Activated naive CD4-positive, alpha-beta T cell treated with anti-CD3 and anti-CD28 coated beads for 36 hours (primary cell): ENCODE measurements at regions of chr9 and their contacts with region 1.

Region 1: DNA sequence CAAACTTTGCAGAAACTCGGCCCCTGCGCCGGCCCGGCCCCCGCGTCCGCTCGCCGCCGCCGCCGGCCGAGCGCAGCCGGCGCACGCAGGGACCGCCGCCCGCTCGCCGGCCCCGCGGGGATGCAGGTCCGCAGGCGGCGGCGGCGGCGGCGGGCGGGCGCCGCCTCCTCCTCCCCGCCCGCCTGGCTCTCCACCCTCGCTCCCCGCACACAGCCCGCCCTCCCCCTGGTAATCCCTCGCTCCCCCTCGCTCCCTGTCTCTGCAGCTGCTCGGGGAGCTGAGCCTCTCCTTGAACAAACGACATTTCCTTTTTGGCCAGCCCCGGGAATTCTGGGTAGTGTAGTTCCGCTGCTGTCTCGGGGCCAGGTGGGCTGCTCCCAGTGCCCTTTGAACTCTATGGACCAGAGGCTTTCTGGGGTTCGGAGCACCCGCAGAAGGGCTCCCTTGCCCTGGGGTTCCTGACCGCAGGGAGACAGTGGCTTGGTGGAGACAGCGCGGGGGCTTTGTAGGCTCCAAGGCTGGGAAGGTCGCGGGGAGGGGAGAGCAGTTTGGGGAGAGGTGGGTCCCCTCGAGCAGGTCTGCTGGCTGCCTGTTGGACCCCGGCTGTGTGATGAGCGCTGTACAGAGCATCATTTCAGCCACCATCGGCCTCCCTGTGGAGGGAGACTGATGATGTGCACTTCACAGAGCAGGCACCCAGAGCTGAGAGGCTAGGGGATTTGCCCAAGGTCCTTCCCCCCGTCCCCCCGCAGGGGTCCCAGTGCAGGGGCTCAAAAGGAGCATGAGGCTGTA is 1.8 kb upstream of the FAM78A start:
- DNase-seq: peak; percentile 86
- H3K4me3 Mint-ChIP-seq: peak overlapping the region; percentile 76
- H3K27ac Mint-ChIP-seq: peak overlapping the region; percentile 67
- H3K4me1 Mint-ChIP-seq: peaks cover 20% of the 10 kb centered on the region
- H3K27me3 Mint-ChIP-seq: peaks cover 4% of the 10 kb centered on the region

Region 2: DNA sequence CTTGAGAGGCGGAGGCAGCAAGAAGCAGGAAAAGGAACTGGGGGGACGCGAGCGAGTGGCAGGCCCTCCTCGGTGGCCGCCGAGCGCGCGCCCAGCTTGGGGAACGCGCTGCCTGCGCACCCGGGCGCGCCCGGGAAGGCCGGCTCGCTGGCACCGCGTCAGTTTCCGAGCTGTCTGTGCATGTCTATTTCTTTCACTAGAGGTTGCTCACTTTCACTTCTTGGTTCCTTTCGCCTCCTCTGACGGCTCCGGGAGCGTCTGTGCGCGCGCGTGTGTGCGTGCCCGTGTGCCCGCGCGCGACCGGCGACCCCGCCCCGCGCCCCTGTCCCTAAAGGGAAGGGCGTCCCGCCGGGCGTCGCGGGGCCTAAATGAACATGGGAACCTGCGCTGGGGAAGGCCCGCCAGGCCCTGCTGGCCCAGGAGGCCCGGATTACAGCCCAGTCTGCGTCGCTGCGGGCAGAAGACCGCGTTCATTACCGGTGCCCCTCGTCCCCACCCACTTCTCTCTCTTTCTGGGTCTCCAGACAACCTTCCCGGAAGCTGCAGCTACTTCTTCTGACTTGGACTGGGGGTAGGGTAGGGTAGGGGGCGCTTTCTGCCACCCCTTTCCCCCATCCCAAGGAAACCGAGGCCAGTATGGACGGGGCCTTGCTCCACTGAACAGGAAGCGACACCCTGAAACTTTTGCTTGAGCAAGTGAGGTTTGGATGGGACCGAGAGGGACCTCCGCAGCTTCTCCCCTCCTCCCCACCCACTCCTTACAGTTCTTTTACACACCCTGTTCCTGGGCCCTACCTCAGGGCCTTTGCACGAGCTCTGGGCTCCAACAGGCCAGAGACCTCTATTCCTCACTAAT is 1894.3 kb before region 1 on chr9:
- CTCF ChIA-PET with region 1: no interaction called
- intact Hi-C with region 1: no loop called
- DNase-seq: peak; percentile 80
- H3K4me3 Mint-ChIP-seq: peak overlapping the region; percentile 69
- H3K27ac Mint-ChIP-seq: peak overlapping the region; percentile 66
- H3K4me1 Mint-ChIP-seq: peaks cover 10% of the 10 kb centered on the region
- H3K27me3 Mint-ChIP-seq: no peaks in the 10 kb centered on the region

Region 3: DNA sequence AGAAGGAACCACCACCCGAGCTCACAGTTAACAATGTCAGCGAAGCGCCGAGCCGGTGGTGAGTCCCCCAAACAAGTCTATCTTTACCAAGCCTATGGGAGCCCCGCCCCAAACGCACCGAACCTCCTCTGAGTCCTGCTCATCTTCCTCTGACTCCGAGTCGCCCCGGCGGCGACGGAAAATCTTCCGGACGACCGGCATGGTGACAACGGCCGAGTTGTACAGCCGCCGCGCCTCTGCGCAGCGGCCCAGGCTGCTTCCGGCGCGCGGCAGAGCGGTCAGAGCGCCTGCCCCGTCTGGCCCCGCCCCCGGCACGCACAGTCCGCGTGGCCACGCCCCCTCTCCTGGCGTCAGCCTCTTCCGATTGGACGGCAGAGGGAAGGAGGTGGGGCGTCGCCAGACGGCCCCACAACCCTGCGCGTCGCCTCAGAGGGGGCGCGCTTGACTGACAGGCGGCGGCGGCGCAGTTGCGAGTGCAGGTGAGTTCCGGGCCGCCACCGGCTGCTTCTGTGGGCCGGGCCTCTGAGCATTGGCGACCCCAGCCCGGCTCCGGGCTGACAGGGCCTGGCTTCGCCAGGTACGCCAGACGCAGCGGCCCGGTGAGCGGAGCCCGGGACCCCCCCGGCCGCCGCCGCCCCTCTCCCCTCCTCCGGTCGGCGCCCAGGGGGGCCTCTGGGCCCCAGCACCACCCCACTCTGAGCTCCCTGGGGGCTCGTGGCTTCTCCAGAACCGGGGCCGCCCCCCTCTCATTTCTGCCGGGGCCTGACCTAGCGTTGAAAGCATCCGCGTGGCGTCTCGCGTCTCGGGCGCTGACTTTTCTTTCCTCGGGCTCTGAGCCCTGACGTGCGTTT is 1442.9 kb before region 1 on chr9 and contains the starts of genes C9orf78 and USP20:
- CTCF ChIA-PET with region 1: no interaction called
- intact Hi-C with region 1: loop called (anchors 10 kb)
- DNase-seq: peak; percentile 97
- H3K4me3 Mint-ChIP-seq: peak within 1 kb of the TSS; percentile 97
- H3K27ac Mint-ChIP-seq: peak within 1 kb of the TSS; percentile 94
- H3K4me1 Mint-ChIP-seq: peaks cover 56% of the 10 kb centered on the region
- H3K27me3 Mint-ChIP-seq: no peaks in the 10 kb centered on the region
- total RNA-seq, gene C9orf78: 45.3 to 45.7 TPM
- total RNA-seq, gene USP20: 54.7 to 54.9 TPM

Region 4: DNA sequence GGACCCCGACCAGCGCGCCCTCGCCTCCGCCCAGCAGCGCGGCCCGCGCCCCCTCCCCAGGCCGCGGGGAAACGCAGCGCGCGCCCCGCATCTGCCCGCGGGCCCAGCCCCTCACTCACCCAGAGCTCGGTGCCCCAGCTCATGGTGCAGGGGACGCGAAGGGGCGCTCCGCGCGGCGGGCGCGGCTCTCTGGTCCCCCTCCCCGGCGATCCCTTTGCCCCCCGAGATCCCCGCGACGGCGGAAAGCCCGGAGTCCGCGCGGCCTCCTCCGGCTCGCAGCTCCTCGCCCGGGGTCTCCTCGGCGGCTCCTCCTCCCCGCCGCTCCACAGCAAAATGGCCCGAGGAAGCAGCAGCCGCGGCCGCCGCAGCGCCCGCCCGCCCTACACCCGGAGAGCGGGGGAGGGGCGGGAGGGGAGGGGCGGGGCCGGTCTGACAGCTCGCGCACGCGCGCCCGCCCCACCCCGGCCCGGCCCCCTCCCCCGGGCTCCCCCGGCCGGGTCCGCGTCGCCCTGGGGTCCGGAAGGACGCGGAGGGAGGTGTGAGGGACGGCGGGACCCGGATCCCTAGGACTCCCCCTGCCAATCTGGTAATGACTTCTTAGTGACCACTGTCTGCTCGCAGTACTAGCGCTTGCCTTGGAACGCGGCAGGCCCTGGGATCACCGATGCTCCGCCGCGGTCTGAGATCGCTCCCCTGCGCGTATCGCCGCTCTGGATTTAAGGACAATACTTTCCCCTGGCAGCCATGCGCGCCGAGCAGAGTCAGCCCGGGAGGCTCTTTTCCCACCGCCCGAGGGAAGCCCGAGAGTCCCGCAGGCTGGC is 1235.1 kb before region 1 on chr9 and contains the start of gene FNBP1:
- CTCF ChIA-PET with region 1: no interaction called
- intact Hi-C with region 1: loop called (anchors 10 kb)
- DNase-seq: peak; percentile 81
- H3K4me3 Mint-ChIP-seq: peak within 1 kb of the TSS; percentile 100
- H3K27ac Mint-ChIP-seq: peak within 1 kb of the TSS; percentile 100
- H3K4me1 Mint-ChIP-seq: peaks cover 39% of the 10 kb centered on the region
- H3K27me3 Mint-ChIP-seq: no peaks in the 10 kb centered on the region
- total RNA-seq, gene FNBP1: 126 to 128 TPM

Region 5: DNA sequence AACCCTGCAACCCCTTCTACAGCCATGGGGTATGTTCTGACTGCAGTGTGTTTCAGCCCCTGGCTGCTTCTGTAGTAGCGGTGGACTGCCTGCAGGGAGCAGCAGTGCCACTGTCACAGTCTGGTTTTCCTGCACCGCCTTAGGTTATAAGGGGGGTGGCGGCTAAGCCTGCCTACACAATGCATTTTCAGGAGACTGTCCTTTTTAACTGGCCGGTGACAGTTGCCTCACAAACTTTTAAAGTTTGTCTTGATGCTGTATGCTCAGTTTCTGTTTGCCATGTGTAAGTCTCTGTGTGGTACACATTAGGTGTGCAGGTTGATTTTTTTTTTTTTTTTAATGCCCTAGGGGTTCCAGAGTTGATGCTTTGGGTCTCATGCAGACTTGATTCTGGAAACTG is 99.7 kb before region 1 on chr9:
- CTCF ChIA-PET with region 1: interaction called, 4 read pairs
- intact Hi-C with region 1: loop called (anchors 1 kb)
- DNase-seq: peak; percentile 81
- H3K4me3 Mint-ChIP-seq: no peak overlapping the region
- H3K27ac Mint-ChIP-seq: no peak overlapping the region
- H3K4me1 Mint-ChIP-seq: no peaks in the 10 kb centered on the region
- H3K27me3 Mint-ChIP-seq: no peaks in the 10 kb centered on the region

Region 6: DNA sequence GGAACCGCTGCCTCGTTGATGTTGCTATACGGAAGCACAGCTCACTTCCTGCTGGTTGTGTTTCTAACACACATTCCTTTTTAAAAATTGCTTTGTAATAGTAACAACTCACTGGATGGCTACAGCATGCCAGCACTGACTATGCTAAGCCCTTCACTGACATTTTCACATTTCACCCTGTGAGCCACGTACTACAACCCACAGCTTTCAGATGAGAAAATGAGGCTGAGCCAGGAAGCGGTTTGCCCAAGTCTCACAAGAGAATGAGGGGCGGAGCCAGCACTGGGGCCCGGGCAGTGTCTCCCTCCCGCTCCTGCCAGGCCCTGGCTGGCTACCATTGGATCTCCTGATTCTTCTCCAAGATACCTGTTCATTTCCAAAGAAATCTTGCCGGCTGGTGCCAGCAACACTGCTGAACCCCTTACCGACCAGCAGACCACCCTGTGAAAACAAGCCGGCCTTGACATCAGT is 40.1 kb before region 1 on chr9:
- CTCF ChIA-PET with region 1: interaction called, 6 read pairs
- intact Hi-C with region 1: loop called (anchors 1 kb)
- DNase-seq: peak; percentile 95
- H3K4me3 Mint-ChIP-seq: peak overlapping the region; percentile 66
- H3K27ac Mint-ChIP-seq: peak overlapping the region; percentile 95
- H3K4me1 Mint-ChIP-seq: peaks cover 34% of the 10 kb centered on the region
- H3K27me3 Mint-ChIP-seq: no peaks in the 10 kb centered on the region

Region 7: DNA sequence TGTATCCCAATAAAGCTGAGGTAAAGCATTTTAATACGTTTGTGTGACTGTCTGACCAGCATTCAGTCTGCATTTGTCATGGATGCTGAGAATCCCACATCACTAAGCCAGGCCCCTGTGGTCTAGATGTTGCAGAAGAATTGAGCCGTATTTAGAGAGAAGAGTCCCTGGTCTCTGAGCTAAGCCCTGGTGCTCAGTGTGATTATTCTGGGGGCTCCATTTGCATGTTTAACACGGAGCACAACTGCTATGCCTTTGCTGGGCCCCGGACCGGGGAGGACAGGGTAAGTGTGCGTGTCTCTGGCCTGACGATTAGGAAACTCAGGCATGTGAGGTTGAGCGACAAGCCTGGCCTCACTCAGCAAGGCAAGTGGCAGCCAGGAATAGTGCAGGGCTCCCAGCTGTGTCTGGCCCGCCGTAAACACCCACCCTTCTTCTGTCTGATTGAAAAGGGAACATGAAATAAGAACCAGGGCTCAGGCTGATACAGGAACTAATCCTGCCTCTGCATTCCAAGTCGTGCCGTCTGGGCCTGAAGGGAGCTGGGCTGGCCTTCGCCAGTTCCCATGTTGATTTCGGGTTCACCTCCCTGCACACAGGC is 24.1 kb before region 1 on chr9:
- CTCF ChIA-PET with region 1: interaction called, 10 read pairs
- intact Hi-C with region 1: loop called (anchors 1 kb)
- DNase-seq: no peak
- H3K4me3 Mint-ChIP-seq: peak overlapping the region; percentile 77
- H3K27ac Mint-ChIP-seq: peak overlapping the region; percentile 87
- H3K4me1 Mint-ChIP-seq: peaks cover 41% of the 10 kb centered on the region
- H3K27me3 Mint-ChIP-seq: no peaks in the 10 kb centered on the region

Region 8: GRCh38 chr9:131310833-131311554 is 32.9 kb after region 1 on chr9:
- CTCF ChIA-PET with region 1: no interaction called
- intact Hi-C with region 1: loop called (anchors 5 kb)
- DNase-seq: peak; percentile 89
- H3K4me3 Mint-ChIP-seq: peak overlapping the region; percentile 39
- H3K27ac Mint-ChIP-seq: no peak overlapping the region
- H3K4me1 Mint-ChIP-seq: peaks cover 12% of the 10 kb centered on the region
- H3K27me3 Mint-ChIP-seq: no peaks in the 10 kb centered on the region